ENCODE measurements at regions of chr1 and their contacts with region 1.

Region 1: GRCh38 chr1:100866041-100866900 is 28.4 kb downstream of the EXTL2 start:
- DNase-seq: no peak
- ATAC-seq: no peak
- H3K4me3 ChIP-seq: no peak overlapping the region
- H3K27ac ChIP-seq: no peak overlapping the region
- H3K4me1 ChIP-seq: no peaks in the 10 kb centered on the region
- H3K27me3 ChIP-seq: no peaks in the 10 kb centered on the region
- CTCF ChIP-seq: peak; percentile 48; the same call in 1 of the 2 replicates

Region 2: GRCh38 chr1:99808391-99809115 is 1057.7 kb before region 1 on chr1:
- CTCF ChIA-PET with region 1: no interaction called
- POLR2A ChIA-PET with region 1: no interaction called
- in situ Hi-C with region 1: no loop called
- intact Hi-C with region 1: loop called (anchors 5 kb)
- DNase-seq: peak; percentile 32
- ATAC-seq: peak; percentile 89
- H3K4me3 ChIP-seq: no peak overlapping the region; a peak in 1 of 4 replicates
- H3K27ac ChIP-seq: no peak overlapping the region
- H3K4me1 ChIP-seq: peaks cover 3% of the 10 kb centered on the region; the same call in 1 of the 2 replicates
- H3K27me3 ChIP-seq: no peaks in the 10 kb centered on the region; the same call in 1 of the 2 replicates
- CTCF ChIP-seq: peak; percentile 52

Region 3: DNA sequence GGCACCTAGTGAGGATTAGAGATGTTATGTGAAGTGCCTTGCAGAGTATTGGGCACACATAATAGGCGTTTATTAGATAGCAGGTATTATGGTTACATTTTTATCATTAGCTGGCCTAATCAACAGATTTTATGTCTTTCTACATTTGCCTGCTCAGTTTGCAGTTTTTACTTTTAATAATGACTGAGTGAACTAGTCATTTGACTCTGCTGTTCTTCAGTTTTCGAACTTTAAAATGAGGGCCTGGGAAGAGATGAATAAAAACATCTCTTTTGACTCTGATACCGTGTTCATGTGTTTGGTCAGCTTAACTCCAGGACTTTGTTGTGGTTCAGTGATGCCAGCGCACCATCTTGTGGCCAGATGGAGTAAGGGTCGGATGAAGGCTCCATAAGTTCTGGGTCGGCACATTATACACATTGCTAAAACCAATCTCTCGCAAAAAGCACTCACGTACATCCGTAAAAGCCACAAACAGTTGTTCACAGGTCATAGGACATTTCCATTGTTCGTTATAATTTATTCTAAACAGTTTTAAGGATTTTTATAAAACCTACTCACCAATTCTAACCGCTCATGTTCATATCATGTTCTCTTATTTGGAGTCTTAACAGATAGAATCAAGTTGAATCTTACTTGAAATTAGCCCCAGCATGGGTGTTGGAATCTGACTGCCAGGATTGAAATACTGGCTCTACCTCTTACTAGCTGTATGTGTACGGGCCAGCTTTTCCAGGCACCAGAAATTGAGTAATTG is 406.7 kb before region 1 on chr1:
- CTCF ChIA-PET with region 1: interaction called, 9 read pairs
- POLR2A ChIA-PET with region 1: interaction called, 5 read pairs
- in situ Hi-C with region 1: no loop called
- intact Hi-C with region 1: loop called (anchors 2 kb)
- DNase-seq: peak; percentile 53
- ATAC-seq: peak; percentile 95
- H3K4me3 ChIP-seq: no peak overlapping the region
- H3K27ac ChIP-seq: no peak overlapping the region
- H3K4me1 ChIP-seq: no peaks in the 10 kb centered on the region; the same call in 1 of the 2 replicates
- H3K27me3 ChIP-seq: no peaks in the 10 kb centered on the region
- CTCF ChIP-seq: peak; percentile 83

Region 4: GRCh38 chr1:100538913-100539835 is 327.1 kb before region 1 on chr1:
- CTCF ChIA-PET with region 1: no interaction called
- POLR2A ChIA-PET with region 1: no interaction called
- in situ Hi-C with region 1: no loop called
- intact Hi-C with region 1: loop called (anchors 5 kb)
- DNase-seq: no peak
- ATAC-seq: peak; percentile 81
- H3K4me3 ChIP-seq: peak overlapping the region; percentile 9 to 16; a peak in 1 of 4 replicates
- H3K27ac ChIP-seq: no peak overlapping the region
- H3K4me1 ChIP-seq: no peaks in the 10 kb centered on the region
- H3K27me3 ChIP-seq: peaks cover 17% of the 10 kb centered on the region
- CTCF ChIP-seq: peak; percentile 13; the same call in 1 of the 2 replicates

Region 5: DNA sequence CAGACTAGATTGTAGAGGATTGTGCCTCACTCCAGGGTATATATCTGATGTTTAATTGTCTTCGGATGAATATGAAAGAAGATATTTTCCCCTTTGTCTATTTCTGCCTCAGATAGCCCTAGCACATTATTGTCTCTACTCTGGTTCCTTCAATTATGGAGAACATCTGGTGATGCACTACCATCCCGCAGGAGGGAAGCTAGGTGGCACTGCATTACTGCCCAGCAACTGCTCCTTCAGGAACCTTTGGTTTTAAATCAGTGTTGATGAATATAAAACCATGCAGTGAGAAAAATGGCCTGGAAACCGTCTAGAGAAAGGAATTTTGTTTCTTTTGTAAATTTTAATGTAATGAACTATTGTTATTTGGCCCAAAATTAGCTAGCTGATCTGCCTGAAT is 259.8 kb before region 1 on chr1:
- CTCF ChIA-PET with region 1: no interaction called
- POLR2A ChIA-PET with region 1: no interaction called
- in situ Hi-C with region 1: no loop called
- intact Hi-C with region 1: loop called (anchors 5 kb)
- DNase-seq: no peak
- ATAC-seq: no peak
- H3K4me3 ChIP-seq: no peak overlapping the region
- H3K27ac ChIP-seq: no peak overlapping the region
- H3K4me1 ChIP-seq: no peaks in the 10 kb centered on the region
- H3K27me3 ChIP-seq: no peaks in the 10 kb centered on the region; the same call in 1 of the 2 replicates
- CTCF ChIP-seq: peak; percentile 57

Region 6: DNA sequence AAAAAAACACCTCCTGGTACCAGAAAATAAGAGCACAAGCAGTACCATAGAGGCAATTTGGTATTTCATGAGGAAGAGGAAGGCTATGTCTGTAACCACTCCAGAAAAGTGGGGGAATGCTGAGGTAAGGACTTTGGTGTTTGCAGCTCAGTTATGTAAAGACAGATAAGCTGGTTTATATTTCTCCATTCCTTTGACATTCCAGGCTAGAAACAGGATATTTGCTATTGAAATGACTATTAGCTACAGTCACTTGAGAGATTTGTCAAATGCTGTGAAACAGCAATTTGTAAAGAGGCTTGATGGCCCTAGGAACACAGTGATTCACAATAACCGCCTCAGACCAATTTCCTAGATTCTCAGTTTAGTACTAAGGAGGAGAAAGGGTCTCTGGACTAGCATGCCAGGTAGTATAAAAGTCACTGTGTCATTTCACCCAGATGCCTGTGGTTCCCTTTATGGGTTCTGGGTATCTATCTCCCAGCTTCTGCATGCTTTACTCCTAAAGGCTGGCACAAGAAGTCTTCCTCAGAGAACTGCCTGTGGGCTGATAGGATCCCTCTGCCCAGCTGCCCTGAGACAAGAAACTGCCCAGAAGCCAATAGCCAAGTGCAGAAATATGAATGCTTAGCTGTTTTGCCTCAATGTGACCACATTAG is 66.2 kb before region 1 on chr1:
- CTCF ChIA-PET with region 1: no interaction called
- POLR2A ChIA-PET with region 1: no interaction called
- in situ Hi-C with region 1: no loop called
- intact Hi-C with region 1: no loop called
- DNase-seq: no peak
- ATAC-seq: no peak
- H3K4me3 ChIP-seq: no peak overlapping the region
- H3K27ac ChIP-seq: no peak overlapping the region
- H3K4me1 ChIP-seq: no peaks in the 10 kb centered on the region
- H3K27me3 ChIP-seq: no peaks in the 10 kb centered on the region
- CTCF ChIP-seq: no peak